HepG2 (cell line): ENCODE measurements at regions of chr14 and their contacts with region 1.

Region 1: DNA sequence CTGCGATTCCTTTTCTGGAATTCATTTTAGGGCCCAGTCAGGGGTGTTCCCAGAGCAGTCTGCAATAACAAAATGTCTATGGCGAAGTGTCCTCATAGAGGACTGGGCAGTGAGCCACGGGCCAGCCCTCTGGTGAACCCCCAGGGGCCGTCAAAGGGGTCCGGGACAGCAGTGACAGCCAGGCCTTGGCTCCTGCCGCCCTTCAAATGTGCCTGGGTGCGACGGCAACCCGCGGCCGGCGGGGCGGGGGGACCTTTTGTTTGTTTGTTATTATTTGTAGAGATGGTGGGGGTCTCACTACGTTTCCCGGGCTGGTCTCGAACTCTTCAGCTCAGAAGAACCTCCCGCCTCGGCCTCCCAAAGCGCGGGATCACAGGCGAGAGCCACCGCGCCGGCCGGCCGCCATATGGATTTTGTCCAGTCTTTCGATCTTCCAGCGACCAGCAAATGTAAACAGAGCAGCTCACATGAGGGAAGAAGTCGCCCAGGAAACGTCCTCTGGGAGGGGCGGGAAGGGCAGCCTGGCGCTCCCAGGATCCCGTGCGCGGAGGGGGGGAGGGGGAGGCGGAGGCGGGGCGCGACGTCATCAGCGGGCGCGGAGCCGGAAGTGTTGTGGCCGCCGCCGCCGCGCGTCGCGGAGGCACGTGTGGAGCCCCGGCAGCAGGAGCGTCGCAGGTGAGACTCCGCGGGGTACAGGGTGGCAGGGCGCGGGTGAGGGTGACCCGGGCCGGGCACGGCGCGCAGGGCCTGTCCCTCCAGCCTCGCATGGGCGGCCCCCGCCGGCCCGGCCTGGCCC is at the start of gene TRMT61A:
- DNase-seq: peak; percentile 92
- ATAC-seq: peak; percentile 71
- H3K4me3 ChIP-seq: peak within 1 kb of the TSS; percentile 87 to 98 (median 95)
- H3K27ac ChIP-seq: peak within 1 kb of the TSS; percentile 89
- H3K4me1 ChIP-seq: peaks cover 65% of the 10 kb centered on the region
- H3K27me3 ChIP-seq: no peaks in the 10 kb centered on the region; a peak in 1 of 5 replicates
- CTCF ChIP-seq: no peak
- EP300 ChIP-seq: peak in 1 of 2 experiments; percentile 26; a peak in 1 of 4 replicates
- POLR2A ChIP-seq: peak; percentile 64 to 71
- RAD21 ChIP-seq: no peak
- total RNA-seq, gene TRMT61A: 12.2 and 13.6 TPM in 2 replicates

Region 2: DNA sequence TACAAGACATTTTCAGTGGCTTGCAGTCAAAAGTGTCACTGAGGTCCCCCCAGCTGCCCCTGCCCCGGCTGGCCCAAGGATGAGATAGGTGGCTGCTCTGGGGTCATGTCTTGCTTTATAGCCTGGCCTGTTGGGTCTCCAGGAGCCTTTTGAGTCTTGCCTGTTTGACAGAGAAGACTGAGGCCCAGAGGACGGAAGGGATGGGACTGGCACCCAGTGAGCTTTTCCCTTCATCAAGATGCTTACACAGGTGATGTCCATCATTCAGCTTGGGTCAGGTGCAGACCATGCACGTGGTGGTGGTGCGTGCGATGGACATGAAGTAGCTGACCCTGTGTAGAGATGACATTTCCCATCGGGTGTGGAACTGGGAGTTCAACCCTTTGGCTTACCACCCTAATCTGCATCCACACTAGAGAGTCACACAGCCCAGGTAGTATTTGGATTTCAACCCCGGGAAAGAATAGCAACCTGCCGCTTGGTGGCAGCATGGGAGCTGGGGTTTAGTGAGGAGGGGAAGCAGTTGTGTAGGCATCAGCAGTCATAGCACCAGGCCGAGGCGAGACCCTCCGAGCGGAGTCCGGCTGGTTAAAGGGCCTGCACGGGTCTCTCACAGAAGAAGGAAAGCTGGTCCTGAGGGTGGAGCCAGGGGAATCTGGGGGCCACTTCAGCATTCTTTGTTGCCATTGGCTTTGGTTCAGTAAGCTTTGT is 18.3 kb before region 1 on chr14:
- CTCF ChIA-PET with region 1: no interaction called
- POLR2A ChIA-PET with region 1: interaction called, 15 read pairs
- in situ Hi-C with region 1: no loop called
- intact Hi-C with region 1: no loop called
- DNase-seq: no peak
- ATAC-seq: no peak
- H3K4me3 ChIP-seq: no peak overlapping the region
- H3K27ac ChIP-seq: no peak overlapping the region
- H3K4me1 ChIP-seq: peaks cover 25% of the 10 kb centered on the region
- H3K27me3 ChIP-seq: no peaks in the 10 kb centered on the region
- CTCF ChIP-seq: no peak
- EP300 ChIP-seq: no peak
- POLR2A ChIP-seq: no peak
- RAD21 ChIP-seq: no peak

Region 3: DNA sequence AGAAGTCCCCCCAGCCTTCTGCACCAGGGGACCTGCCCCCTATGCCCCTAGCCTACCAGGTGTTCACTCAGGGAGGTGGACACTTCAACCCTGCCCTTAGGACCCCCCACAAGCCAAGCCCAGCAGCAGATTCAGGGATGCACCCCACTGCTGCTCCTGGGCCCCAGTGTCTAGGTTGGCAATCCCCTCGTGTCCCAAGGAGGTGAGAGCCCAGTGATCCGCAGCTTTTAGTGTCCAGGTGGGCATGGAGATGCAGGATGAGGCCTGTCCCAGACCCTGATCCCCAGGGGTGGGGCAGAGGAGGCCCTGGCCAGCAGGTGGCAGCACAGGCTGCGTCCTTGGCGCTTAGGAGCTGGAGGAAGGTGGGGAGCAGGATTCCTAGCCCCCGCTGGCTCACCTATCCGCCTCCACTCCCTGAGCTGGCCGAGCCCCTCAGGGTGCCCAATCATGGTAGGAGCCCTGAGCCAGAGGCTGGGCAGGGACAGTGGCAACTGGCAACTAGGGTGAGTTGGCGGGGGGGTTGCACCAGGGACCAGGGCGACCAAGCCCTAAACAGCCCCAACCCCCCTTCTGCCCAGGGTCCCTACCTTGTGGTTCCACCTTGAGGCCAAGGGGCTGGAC is 10.3 kb before region 1 on chr14:
- CTCF ChIA-PET with region 1: no interaction called
- POLR2A ChIA-PET with region 1: interaction called, 24 read pairs
- in situ Hi-C with region 1: no loop called
- intact Hi-C with region 1: no loop called
- DNase-seq: peak; percentile 51
- ATAC-seq: peak; percentile 82
- H3K4me3 ChIP-seq: peak overlapping the region in 2 of 3 experiments; percentile 26 to 59; a peak in 4 of 6 replicates
- H3K27ac ChIP-seq: no peak overlapping the region
- H3K4me1 ChIP-seq: peaks cover 39% of the 10 kb centered on the region
- H3K27me3 ChIP-seq: no peaks in the 10 kb centered on the region
- CTCF ChIP-seq: peak; percentile 99
- EP300 ChIP-seq: no peak
- POLR2A ChIP-seq: 0 out of 4 replicates have a peak, but pooled peaks of 1 of the 2 experiments have one; percentile 34
- RAD21 ChIP-seq: peak; percentile 93

Region 4: DNA sequence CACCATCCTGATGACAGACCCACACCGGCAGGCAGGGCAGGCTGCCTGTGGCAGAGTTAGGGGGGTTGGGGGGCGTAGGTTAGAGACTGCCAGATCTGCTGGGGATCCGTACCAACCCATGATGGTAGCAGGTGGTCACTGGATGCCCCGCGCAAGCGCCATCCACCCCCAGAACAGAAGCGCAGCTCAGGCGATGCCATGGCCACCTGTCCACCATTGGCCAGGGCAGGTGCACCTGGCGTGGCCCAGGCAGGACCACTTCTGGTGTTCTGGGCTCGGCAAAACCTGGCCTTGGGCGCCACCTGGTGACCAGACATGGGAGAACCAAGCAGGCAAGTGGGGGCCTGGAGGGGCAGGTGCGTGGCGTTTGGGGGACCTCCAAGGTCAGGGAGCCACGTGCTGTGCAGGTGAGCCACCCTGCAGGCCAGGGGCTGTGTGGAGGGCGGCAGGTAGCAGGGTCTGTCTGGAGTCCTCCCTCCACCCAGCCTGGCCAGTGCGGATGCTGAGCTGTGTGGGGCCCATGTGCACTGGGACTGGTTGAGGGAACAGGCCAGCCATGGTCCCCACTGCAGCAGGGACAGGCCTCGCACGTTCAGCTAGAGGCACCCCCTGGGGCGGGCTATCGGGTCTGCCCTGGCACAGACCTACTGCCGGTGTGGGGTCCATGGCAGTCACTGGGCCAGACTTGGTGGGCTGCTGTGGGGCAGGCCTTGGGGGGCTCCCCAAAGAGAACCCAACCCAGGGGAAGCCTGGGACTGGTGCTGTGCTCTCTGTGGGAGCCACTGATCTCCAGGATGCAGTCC is 18.1 kb after region 1 on chr14:
- CTCF ChIA-PET with region 1: no interaction called
- POLR2A ChIA-PET with region 1: interaction called, 37 read pairs
- in situ Hi-C with region 1: no loop called
- intact Hi-C with region 1: loop called (anchors 2 kb)
- DNase-seq: peak; percentile 44
- ATAC-seq: peak; percentile 45
- H3K4me3 ChIP-seq: no peak overlapping the region
- H3K27ac ChIP-seq: no peak overlapping the region
- H3K4me1 ChIP-seq: peaks cover 43% of the 10 kb centered on the region
- H3K27me3 ChIP-seq: peaks cover 2 to 7% of the 10 kb centered on the region in 2 experiments; a peak in 2 of 5 replicates
- CTCF ChIP-seq: peak; percentile 100
- EP300 ChIP-seq: no peak
- POLR2A ChIP-seq: no peak
- RAD21 ChIP-seq: peak; percentile 98

Region 5: GRCh38 chr14:103562429-103563225 is 33.8 kb after region 1 on chr14 and contains the starts of genes BAG5 and COA8:
- CTCF ChIA-PET with region 1: no interaction called
- POLR2A ChIA-PET with region 1: interaction called, 12 read pairs
- in situ Hi-C with region 1: no loop called
- intact Hi-C with region 1: no loop called
- DNase-seq: peak; percentile 68
- ATAC-seq: peak; percentile 83
- H3K4me3 ChIP-seq: peak within 1 kb of the TSS; percentile 81 to 100 (median 92)
- H3K27ac ChIP-seq: peak within 1 kb of the TSS; percentile 88
- H3K4me1 ChIP-seq: peaks cover 48% of the 10 kb centered on the region
- H3K27me3 ChIP-seq: peaks cover 0 to 3% of the 10 kb centered on the region in 2 experiments; a peak in 1 of 5 replicates
- CTCF ChIP-seq: peak; percentile 17; the same call in 1 of the 2 replicates
- EP300 ChIP-seq: 0 out of 4 replicates have a peak, but pooled peaks of 1 of the 2 experiments have one; percentile 12
- POLR2A ChIP-seq: peak; percentile 62 to 76
- RAD21 ChIP-seq: peak; percentile 10; the same call in 1 of the 2 replicates
- total RNA-seq, gene BAG5: 21.0 and 34.8 TPM in 2 replicates
- total RNA-seq, gene COA8: 25.1 and 25.2 TPM in 2 replicates